ENCODE measurements at regions of chr7 and their contacts with region 1.

Region 1: DNA sequence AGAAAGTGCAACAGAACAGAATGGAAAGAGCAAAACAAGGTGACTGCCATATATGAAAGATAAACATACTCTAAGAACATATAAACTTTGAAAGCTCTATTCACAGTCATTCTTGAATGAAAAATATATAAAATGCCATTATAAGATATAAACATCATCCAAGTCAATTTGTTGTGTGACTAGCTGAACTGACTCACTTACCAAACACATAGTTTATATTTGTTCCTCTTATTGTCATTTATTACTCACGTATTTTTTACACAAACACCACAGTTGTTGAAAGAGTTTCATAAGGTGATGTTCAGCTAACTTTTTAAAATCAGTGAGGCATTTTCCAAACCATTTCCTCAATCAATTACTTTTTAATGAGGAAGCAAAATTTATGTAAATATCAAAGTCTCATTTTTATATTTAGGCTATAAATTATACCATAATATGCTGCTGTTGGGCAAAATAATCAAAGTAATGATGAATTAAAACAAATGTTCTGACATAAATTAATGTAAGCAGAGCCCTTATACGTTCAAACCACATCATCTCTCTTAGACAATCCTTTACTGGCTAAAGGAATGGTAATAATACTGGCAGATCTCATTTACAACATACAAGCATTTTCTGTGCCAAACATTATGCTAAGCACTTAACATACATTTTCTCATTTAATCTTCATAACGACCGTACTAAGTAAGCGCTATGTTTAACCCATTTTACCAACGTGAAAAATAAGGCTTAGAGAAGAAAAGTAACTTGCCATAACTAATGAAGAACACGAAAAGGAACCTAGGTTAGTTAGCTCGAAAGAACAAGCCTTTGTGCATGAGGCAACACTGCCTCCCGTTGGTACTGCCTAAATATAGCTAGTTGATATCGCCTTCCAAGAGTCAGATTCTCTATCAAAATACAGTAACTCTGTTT is 7.3 kb downstream of the LRRN3 start:
- DNase-seq: peak; percentile 61 to 66
- H3K4me3 ChIP-seq: no peak overlapping the region
- H3K4me1 ChIP-seq: peaks cover 46% of the 10 kb centered on the region
- H3K27me3 ChIP-seq: no peaks in the 10 kb centered on the region

Region 2: GRCh38 chr7:110548372-110548771 is 549.9 kb before region 1 on chr7:
- in situ Hi-C with region 1: no loop called
- DNase-seq: no peak
- H3K4me3 ChIP-seq: no peak overlapping the region
- H3K4me1 ChIP-seq: no peaks in the 10 kb centered on the region
- H3K27me3 ChIP-seq: no peaks in the 10 kb centered on the region

Region 3: GRCh38 chr7:110733221-110733620 is 365.0 kb before region 1 on chr7:
- in situ Hi-C with region 1: no loop called
- DNase-seq: no peak
- H3K4me3 ChIP-seq: no peak overlapping the region
- H3K4me1 ChIP-seq: no peaks in the 10 kb centered on the region
- H3K27me3 ChIP-seq: no peaks in the 10 kb centered on the region; the same call in 1 of the 2 replicates

Region 4: DNA sequence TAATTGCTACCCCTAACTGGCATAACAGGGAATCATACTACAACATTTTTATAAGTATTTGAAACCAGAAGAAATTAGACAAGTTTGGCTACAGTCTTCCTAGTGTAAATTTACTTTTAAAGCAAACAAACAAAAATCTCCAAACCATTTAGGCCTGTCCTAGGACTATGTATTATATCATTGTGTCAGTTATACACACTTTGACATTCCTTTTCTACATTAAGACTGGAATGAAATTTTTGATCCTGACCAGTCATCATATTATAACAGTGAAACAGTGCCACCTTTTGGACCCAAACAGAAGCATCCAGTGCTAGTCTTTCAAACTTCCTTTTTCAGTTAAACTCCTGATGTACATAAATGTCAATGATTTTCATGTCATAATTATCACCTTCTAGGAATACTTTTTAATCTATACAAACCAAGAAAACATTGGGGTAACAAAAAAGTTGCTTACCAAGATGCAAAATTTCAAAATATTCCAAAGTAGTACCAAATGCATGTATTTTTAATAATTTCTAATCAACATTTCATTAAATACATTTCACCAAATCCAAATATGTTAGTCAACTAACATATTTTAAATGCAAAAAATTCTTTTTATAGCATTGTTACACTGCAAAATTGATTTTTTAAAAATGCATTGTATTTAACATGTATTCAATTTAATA is 388.3 kb after region 1 on chr7:
- in situ Hi-C with region 1: loop called (anchors 25 kb)
- DNase-seq: peak; percentile 33 to 68
- H3K4me3 ChIP-seq: no peak overlapping the region
- H3K4me1 ChIP-seq: no peaks in the 10 kb centered on the region
- H3K27me3 ChIP-seq: no peaks in the 10 kb centered on the region

Region 5: DNA sequence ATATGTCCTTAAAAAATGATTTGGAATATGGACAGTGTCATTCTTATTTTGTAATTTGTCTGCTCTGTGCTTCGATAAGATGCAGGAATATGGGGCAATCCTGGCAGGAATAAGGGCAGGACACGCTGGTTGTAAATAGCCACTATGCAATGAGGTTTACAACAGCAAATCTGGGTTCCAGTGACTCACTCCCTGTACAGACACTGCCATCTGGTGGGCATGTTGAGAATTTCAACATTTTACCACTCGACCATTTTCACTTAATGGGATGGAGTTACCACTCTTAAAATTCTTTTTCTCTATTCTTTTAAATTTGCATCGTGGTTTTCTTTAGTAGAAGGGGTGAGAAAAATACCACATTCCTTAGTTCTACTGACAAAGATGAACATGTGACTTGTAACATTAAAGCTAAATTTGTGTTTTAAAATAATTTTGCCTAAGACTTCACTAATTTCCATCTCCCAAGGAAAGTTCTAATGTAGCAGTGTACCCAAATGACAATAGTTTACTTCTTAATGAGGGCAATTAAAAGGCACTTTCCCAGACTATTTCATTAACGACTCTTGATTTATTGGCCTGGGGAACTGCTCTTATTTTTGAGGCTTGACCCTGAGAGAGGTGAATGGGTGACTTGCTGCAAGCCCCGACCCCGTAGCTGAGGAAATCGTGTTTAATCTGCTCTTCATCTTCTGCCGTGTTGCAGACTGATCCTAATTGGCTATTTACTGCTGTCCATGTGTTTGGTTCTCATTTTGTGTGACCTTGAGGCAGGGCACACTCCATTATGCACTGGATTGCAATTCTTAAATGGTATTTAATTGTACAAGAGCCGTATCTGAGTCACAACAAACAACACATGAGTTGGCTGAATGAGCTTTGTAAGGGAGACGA is 637.6 kb after region 1 on chr7:
- in situ Hi-C with region 1: loop called (anchors 10 kb)
- DNase-seq: peak; percentile 76 to 78
- H3K4me3 ChIP-seq: no peak overlapping the region
- H3K4me1 ChIP-seq: no peaks in the 10 kb centered on the region
- H3K27me3 ChIP-seq: no peaks in the 10 kb centered on the region